ENCODE measurements at regions of chr2 and their contacts with region 1.

Region 1: DNA sequence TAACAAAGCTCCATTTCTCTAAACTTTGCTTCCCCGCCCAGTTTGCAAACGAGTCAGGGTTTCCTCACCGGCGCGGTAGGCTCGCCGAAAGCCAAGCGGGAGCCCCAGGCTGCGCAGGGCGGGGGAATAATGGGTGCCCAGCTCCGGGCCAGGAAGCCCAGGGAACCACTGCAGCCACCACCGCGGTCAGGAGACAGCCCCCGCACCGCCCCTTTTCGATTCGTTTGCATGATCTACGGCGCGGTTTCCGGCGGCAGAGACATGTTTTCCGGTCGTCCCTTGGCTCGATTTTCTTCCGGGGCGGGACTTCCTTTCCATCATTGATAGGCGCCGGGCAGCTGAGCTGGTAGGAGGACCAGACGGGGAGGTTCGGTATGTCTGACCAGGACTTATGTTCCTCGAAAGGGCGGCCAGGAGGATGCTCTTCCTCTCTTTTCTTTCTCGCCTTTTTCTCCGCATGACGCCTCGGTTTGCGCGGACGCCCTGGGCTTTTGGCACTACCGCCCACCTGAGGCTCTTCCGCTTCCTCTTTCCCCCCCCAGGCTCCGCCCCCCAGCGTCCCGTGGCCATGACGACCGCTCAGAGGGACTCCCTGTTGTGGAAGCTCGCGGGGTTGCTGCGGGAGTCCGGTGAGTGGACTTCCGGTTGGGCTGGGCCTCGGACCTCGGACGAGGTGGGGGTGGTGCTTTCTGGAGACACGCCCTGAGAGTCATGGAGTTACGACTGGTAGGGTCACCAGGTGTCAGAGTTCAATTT is at the start of gene STK11IP:
- DNase-seq: peak; percentile 94 to 95 (median 94)
- H3K4me3 ChIP-seq: peak within 1 kb of the TSS; percentile 72 to 98 (median 92)
- H3K27ac ChIP-seq: peak within 1 kb of the TSS; percentile 25 to 80
- H3K4me1 ChIP-seq: peaks cover 2 to 34% (median 22%) of the 10 kb centered on the region in 4 experiments
- H3K27me3 ChIP-seq: no peaks in the 10 kb centered on the region

Region 2: DNA sequence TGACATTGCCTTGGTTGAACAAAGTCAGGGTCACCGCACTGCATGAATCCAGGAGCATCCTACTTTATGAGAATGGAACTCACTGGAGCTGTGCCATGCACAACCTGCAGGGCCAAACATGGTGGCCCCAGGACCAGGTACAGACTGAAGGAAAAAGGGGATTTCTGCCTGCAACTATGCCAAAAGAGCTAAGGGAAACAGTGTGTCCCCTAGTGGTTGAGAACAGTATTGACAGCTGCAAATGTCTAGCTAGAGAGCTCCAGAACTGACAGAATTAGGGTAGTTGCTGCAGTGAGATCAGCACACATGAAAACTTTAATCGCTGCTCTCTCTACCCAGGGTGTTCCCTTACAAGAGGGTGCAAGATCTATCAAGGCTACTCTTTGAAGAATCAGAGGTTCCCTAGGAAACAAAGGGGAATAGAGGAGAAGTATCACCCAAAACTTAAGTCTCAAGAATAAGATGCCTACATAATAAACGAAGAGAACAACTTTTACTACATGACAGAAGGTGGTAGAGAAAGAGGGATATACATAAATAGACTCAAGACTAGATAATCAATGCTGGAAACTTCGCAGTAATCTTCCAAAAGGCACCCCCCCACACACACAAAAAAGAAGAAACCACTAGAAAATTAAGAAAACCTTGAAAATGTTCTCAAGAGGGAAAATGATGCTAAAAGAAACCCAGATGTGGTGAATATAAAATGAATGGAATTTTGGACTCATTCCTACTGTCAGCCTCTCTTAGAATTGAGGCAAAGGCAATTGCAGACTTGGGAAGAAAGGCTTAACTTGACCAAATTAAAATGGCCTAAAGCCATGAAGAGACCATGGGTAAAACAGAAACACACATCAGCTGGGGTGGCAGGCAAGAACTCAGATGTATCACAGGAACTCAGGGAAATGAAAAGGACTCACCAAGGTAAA is 493.4 kb before region 1 on chr2:
- CTCF ChIA-PET with region 1: no interaction called
- POLR2A ChIA-PET with region 1: no interaction called
- DNase-seq: peak; percentile 48 to 61 (median 59)
- H3K4me3 ChIP-seq: no peak overlapping the region
- H3K27ac ChIP-seq: no peak overlapping the region
- H3K4me1 ChIP-seq: peaks cover 4 to 10% (median 4%) of the 10 kb centered on the region in 4 experiments
- H3K27me3 ChIP-seq: no peaks in the 10 kb centered on the region

Region 3: GRCh38 chr2:219576493-219577388 is 21.0 kb before region 1 on chr2:
- CTCF ChIA-PET with region 1: interaction called, 10 read pairs
- POLR2A ChIA-PET with region 1: interaction called, 6 read pairs
- DNase-seq: no peak
- H3K4me3 ChIP-seq: no peak overlapping the region
- H3K27ac ChIP-seq: no peak overlapping the region
- H3K4me1 ChIP-seq: peaks cover 0 to 7% (median 3%) of the 10 kb centered on the region in 4 experiments
- H3K27me3 ChIP-seq: peaks cover 0 to 4% (median 0%) of the 10 kb centered on the region in 5 experiments

Region 4: GRCh38 chr2:219968685-219969345 is 371.1 kb after region 1 on chr2:
- CTCF ChIA-PET with region 1: no interaction called
- POLR2A ChIA-PET with region 1: no interaction called
- DNase-seq: no peak
- H3K4me3 ChIP-seq: no peak overlapping the region
- H3K27ac ChIP-seq: no peak overlapping the region
- H3K4me1 ChIP-seq: no peaks in the 10 kb centered on the region
- H3K27me3 ChIP-seq: no peaks in the 10 kb centered on the region

Measured in common myeloid progenitor, CD34-positive (primary cell).